CD4-positive, alpha-beta T cell (primary cell): ENCODE measurements at regions of chr4 and their contacts with region 1.

Region 1: GRCh38 chr4:57020467-57021101 is 41.9 kb downstream of the POLR2B start:
- DNase-seq: no peak
- ATAC-seq: no peak
- H3K4me3 ChIP-seq: no peak overlapping the region
- H3K4me3 Mint-ChIP-seq: no peak overlapping the region
- H3K27ac ChIP-seq: no peak overlapping the region
- H3K27ac Mint-ChIP-seq: no peak overlapping the region
- H3K4me1 ChIP-seq: no peaks in the 10 kb centered on the region
- H3K4me1 Mint-ChIP-seq: no peaks in the 10 kb centered on the region
- H3K27me3 ChIP-seq: no peaks in the 10 kb centered on the region
- H3K27me3 Mint-ChIP-seq: no peaks in the 10 kb centered on the region
- CTCF ChIP-seq: no peak

Region 2: GRCh38 chr4:56480691-56481090 is 539.9 kb before region 1 on chr4:
- CTCF ChIA-PET with region 1: no interaction called
- POLR2A ChIA-PET with region 1: no interaction called
- intact Hi-C with region 1: loop called in 1 of 2 experiments (anchors 10 kb)
- DNase-seq: no peak
- ATAC-seq: no peak
- H3K4me3 ChIP-seq: no peak overlapping the region
- H3K4me3 Mint-ChIP-seq: no peak overlapping the region
- H3K27ac ChIP-seq: no peak overlapping the region
- H3K27ac Mint-ChIP-seq: no peak overlapping the region
- H3K4me1 ChIP-seq: no peaks in the 10 kb centered on the region
- H3K4me1 Mint-ChIP-seq: no peaks in the 10 kb centered on the region
- H3K27me3 ChIP-seq: no peaks in the 10 kb centered on the region
- H3K27me3 Mint-ChIP-seq: no peaks in the 10 kb centered on the region
- CTCF ChIP-seq: no peak

Region 3: GRCh38 chr4:56977321-56978012 is 43.1 kb before region 1 on chr4 and contains the start of gene NOA1:
- CTCF ChIA-PET with region 1: no interaction called
- POLR2A ChIA-PET with region 1: no interaction called
- intact Hi-C with region 1: no loop called
- DNase-seq: peak; percentile 95 to 99 (median 96)
- ATAC-seq: peak; percentile 80
- H3K4me3 ChIP-seq: peak within 1 kb of the TSS; percentile 99
- H3K4me3 Mint-ChIP-seq: peak within 1 kb of the TSS; percentile 96
- H3K27ac ChIP-seq: peak within 1 kb of the TSS; percentile 73 to 92
- H3K27ac Mint-ChIP-seq: peak within 1 kb of the TSS; percentile 95
- H3K4me1 ChIP-seq: peaks cover 54% of the 10 kb centered on the region
- H3K4me1 Mint-ChIP-seq: peaks cover 70% of the 10 kb centered on the region
- H3K27me3 ChIP-seq: no peaks in the 10 kb centered on the region
- H3K27me3 Mint-ChIP-seq: no peaks in the 10 kb centered on the region
- CTCF ChIP-seq: no peak
- total RNA-seq, gene NOA1: 14.3 to 15.6 TPM

Region 4: DNA sequence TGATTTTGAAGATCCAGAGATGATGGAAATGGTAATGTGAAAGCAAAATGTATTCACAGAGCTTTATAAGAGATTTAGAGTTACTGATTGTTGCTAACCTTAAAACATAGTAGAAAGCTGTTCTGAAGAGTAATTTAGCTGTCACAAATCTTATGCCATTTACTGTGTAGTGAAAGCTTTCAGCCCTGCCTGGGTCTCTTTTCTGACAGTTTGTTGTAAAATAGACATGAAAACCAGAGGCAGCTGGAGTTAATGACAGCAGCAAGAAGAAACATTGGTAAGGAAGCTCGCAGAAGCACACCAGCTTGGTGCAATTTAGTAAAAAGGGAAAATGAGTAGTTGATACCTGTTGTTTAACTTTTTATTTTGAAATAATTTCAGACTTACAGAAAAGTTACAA is 20.8 kb before region 1 on chr4:
- CTCF ChIA-PET with region 1: no interaction called
- POLR2A ChIA-PET with region 1: no interaction called
- intact Hi-C with region 1: loop called in 1 of 2 experiments (anchors 2 kb)
- DNase-seq: no peak
- ATAC-seq: no peak
- H3K4me3 ChIP-seq: no peak overlapping the region
- H3K4me3 Mint-ChIP-seq: no peak overlapping the region
- H3K27ac ChIP-seq: no peak overlapping the region
- H3K27ac Mint-ChIP-seq: no peak overlapping the region
- H3K4me1 ChIP-seq: no peaks in the 10 kb centered on the region
- H3K4me1 Mint-ChIP-seq: no peaks in the 10 kb centered on the region
- H3K27me3 ChIP-seq: no peaks in the 10 kb centered on the region
- H3K27me3 Mint-ChIP-seq: no peaks in the 10 kb centered on the region
- CTCF ChIP-seq: no peak

Region 5: DNA sequence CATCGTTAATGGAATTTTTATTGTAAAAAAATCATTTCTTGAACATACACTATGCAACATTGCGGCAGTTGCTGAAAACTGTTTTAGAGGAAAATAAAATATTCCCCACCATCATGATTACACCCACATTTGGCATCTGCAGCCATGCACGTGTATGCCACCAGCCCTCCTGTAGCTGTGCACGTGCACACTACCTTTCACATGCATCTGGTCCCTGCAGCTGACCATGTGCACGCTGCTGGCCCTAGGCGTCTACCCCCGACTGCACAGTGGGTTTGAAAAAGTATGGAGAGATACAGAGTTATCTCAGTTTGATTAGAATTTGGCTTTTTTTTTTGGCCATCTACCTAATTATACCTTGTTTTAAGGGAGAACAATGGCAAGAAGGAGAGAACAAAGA is 659.4 kb after region 1 on chr4:
- CTCF ChIA-PET with region 1: no interaction called
- POLR2A ChIA-PET with region 1: no interaction called
- intact Hi-C with region 1: no loop called
- DNase-seq: no peak
- ATAC-seq: no peak
- H3K4me3 ChIP-seq: no peak overlapping the region
- H3K4me3 Mint-ChIP-seq: no peak overlapping the region
- H3K27ac ChIP-seq: no peak overlapping the region
- H3K27ac Mint-ChIP-seq: no peak overlapping the region
- H3K4me1 ChIP-seq: no peaks in the 10 kb centered on the region
- H3K4me1 Mint-ChIP-seq: no peaks in the 10 kb centered on the region
- H3K27me3 ChIP-seq: no peaks in the 10 kb centered on the region
- H3K27me3 Mint-ChIP-seq: no peaks in the 10 kb centered on the region
- CTCF ChIP-seq: no peak